PC-9 (cell line): ENCODE measurements at regions of chr20 and their contacts with region 1.

Region 1: GRCh38 chr20:10316582-10316981 is 98.0 kb downstream of the SNAP25 start:
- DNase-seq: no peak
- H3K4me3 ChIP-seq: no peak overlapping the region
- H3K27ac ChIP-seq: no peak overlapping the region
- H3K4me1 ChIP-seq: peaks cover 14% of the 10 kb centered on the region
- H3K27me3 ChIP-seq: no peaks in the 10 kb centered on the region
- CTCF ChIP-seq: peak; percentile 44

Region 2: DNA sequence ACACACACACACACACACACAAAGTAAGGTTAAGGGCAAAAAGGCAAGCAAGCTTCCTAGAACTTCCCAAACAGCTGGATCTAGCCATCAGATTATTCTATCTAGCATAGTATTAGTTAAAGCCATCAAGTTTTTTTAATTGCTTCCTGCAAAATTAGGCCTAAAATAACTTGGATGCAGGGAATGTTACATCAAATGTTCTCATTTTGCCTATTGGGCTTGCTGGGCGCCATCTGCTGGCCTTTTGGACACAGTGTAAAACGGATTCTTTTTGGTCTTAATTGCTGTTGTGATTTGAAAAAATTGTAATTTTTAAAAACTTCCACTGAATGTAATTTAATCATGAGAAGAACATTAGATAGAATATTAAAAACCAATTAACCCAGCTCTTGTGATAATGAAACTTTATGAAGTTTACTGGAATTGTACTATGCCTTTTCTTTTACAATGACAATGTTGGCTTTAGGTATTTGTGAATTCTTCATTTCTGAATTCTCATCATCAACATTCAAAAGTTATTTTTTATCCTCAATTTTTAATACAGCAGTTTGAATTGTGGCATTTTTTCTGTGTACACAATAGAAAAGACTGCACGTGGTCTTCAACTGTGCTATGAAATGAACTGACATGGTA is 110.6 kb after region 1 on chr20:
- CTCF ChIA-PET with region 1: no interaction called
- POLR2A ChIA-PET with region 1: no interaction called
- intact Hi-C with region 1: loop called (anchors 5 kb)
- DNase-seq: peak; percentile 33 to 56
- H3K4me3 ChIP-seq: no peak overlapping the region
- H3K27ac ChIP-seq: no peak overlapping the region
- H3K4me1 ChIP-seq: no peaks in the 10 kb centered on the region
- H3K27me3 ChIP-seq: no peaks in the 10 kb centered on the region
- CTCF ChIP-seq: peak; percentile 85

Region 3: GRCh38 chr20:10511509-10512251 is 195.1 kb after region 1 on chr20:
- CTCF ChIA-PET with region 1: no interaction called
- POLR2A ChIA-PET with region 1: no interaction called
- intact Hi-C with region 1: no loop called
- DNase-seq: peak; percentile 82
- H3K4me3 ChIP-seq: no peak overlapping the region
- H3K27ac ChIP-seq: peak overlapping the region; percentile 82
- H3K4me1 ChIP-seq: peaks cover 17% of the 10 kb centered on the region
- H3K27me3 ChIP-seq: no peaks in the 10 kb centered on the region
- CTCF ChIP-seq: no peak

Region 4: DNA sequence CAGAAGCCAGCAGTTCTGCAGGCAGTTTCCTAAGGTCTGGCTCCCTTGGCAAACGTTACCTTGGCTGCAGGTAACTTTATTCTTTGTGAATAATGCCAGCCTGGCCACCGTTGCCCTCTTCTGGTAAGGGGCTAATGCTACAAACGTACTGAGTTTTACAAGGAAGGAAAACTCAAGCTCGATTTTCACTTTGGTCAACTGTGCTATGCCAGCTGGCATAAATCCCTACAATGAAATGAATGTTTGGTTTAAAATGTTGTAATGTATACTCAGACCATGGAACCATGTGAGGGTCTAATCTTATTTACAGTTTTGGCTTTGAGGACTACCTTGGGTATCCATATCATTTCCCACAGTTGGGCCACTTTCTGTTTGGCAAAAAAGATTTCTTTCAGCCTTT is 219.9 kb after region 1 on chr20:
- CTCF ChIA-PET with region 1: no interaction called
- POLR2A ChIA-PET with region 1: no interaction called
- intact Hi-C with region 1: loop called (anchors 5 kb)
- DNase-seq: peak; percentile 30 to 45
- H3K4me3 ChIP-seq: no peak overlapping the region
- H3K27ac ChIP-seq: no peak overlapping the region
- H3K4me1 ChIP-seq: peaks cover 50% of the 10 kb centered on the region
- H3K27me3 ChIP-seq: no peaks in the 10 kb centered on the region
- CTCF ChIP-seq: peak; percentile 64